ENCODE measurements at regions of chr4 and their contacts with region 1.

Region 1: DNA sequence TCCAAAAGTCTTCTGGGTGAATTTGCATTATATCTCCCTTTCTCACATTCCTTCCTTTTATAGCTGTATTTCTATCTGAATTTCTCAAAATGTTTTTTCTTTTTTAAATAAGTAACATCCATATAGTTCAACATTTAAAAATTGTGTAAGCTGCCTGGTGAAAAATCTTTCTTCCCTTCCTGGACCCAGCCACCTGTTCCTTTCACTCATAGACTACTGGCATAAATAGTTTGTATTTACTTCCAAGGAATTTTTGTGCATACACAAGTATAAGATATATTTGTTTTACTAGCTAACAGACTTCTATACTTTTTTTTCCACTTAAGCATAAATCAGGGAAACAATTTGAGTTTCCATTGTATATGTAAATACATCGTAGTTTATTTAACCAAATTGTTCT is 35.7 kb downstream of the PACRGL start:
- DNase-seq: no peak
- H3K4me3 ChIP-seq: no peak overlapping the region
- H3K27ac ChIP-seq: no peak overlapping the region
- H3K4me1 ChIP-seq: no peaks in the 10 kb centered on the region
- H3K27me3 ChIP-seq: no peaks in the 10 kb centered on the region
- CTCF ChIP-seq: no peak
- POLR2A ChIP-seq: no peak

Region 2: GRCh38 chr4:20805716-20806115 is 69.8 kb after region 1 on chr4:
- intact Hi-C with region 1: no loop called
- DNase-seq: no peak
- H3K4me3 ChIP-seq: no peak overlapping the region
- H3K27ac ChIP-seq: no peak overlapping the region
- H3K4me1 ChIP-seq: no peaks in the 10 kb centered on the region
- H3K27me3 ChIP-seq: no peaks in the 10 kb centered on the region
- CTCF ChIP-seq: no peak
- POLR2A ChIP-seq: no peak

Region 3: GRCh38 chr4:21113496-21114223 is 377.7 kb after region 1 on chr4:
- intact Hi-C with region 1: loop called (anchors 10 kb)
- DNase-seq: no peak
- H3K4me3 ChIP-seq: no peak overlapping the region
- H3K27ac ChIP-seq: no peak overlapping the region
- H3K4me1 ChIP-seq: no peaks in the 10 kb centered on the region
- H3K27me3 ChIP-seq: no peaks in the 10 kb centered on the region
- CTCF ChIP-seq: no peak
- POLR2A ChIP-seq: no peak

Region 4: DNA sequence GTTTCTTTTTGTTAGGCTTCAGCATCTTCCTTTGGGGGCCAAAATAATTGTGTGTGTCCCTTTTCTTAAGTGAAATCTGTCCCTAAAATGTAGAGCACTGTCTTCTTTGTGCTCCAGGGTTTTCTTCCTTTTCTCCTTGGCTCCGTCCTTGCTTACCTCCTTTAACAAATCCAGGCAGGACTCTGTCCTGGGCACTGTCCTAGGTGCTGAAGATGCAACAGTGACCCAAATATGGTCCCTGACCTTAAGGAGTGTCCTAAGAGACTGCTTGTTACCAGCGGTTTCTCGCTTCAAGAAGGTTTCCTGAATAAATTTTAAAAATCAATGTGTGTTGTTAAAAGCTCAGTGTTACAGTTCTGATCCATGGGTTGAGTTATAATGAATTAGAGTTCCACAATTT is 740.8 kb after region 1 on chr4:
- intact Hi-C with region 1: loop called (anchors 5 kb)
- DNase-seq: no peak
- H3K4me3 ChIP-seq: no peak overlapping the region
- H3K27ac ChIP-seq: no peak overlapping the region
- H3K4me1 ChIP-seq: no peaks in the 10 kb centered on the region
- H3K27me3 ChIP-seq: peaks cover 0 to 13% of the 10 kb centered on the region in 2 donors
- CTCF ChIP-seq: no peak
- POLR2A ChIP-seq: no peak

Measured in breast epithelium (tissue), 4 donors.